ENCODE measurements at regions of chr5 and their contacts with region 1.

Region 1: GRCh38 chr5:16552666-16553343 is 64.0 kb downstream of the RETREG1 start:
- DNase-seq: peak; percentile 62
- H3K4me3 ChIP-seq: no peak overlapping the region
- H3K27ac ChIP-seq: no peak overlapping the region
- H3K4me1 ChIP-seq: no peaks in the 10 kb centered on the region
- H3K27me3 ChIP-seq: no peaks in the 10 kb centered on the region
- CTCF ChIP-seq: peak; percentile 91 to 97

Region 2: DNA sequence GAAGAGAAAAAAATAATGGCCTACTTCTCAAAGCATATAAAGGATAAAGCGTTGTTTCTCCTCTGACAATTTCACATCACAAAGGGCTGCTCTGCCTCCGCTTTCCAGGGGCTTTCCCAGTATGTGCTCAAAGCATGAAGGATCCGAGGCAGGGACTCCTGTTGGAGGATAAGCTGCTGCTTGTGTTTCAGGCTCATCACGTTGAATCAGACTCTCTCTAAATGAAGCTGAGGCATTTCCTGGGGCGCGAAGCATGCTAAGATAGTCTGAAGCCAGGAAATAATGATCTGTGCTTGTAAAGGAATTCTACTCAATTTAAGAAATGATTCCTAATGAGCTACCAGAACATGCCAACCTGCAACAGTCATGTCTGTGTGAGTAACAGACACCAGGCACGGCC is 470.8 kb before region 1 on chr5:
- CTCF ChIA-PET with region 1: no interaction called
- dilution Hi-C with region 1: no loop called
- in situ Hi-C with region 1: no loop called
- intact Hi-C with region 1: no loop called
- DNase-seq: no peak
- H3K4me3 ChIP-seq: no peak overlapping the region
- H3K27ac ChIP-seq: no peak overlapping the region
- H3K4me1 ChIP-seq: no peaks in the 10 kb centered on the region
- H3K27me3 ChIP-seq: no peaks in the 10 kb centered on the region
- CTCF ChIP-seq: no peak

Region 3: GRCh38 chr5:16345454-16345853 is 207.4 kb before region 1 on chr5:
- CTCF ChIA-PET with region 1: interaction called, 3 read pairs
- dilution Hi-C with region 1: no loop called
- in situ Hi-C with region 1: no loop called
- intact Hi-C with region 1: loop called (anchors 1 kb)
- DNase-seq: no peak
- H3K4me3 ChIP-seq: no peak overlapping the region
- H3K27ac ChIP-seq: no peak overlapping the region
- H3K4me1 ChIP-seq: no peaks in the 10 kb centered on the region
- H3K27me3 ChIP-seq: no peaks in the 10 kb centered on the region
- CTCF ChIP-seq: peak; percentile 22 to 48

Region 4: DNA sequence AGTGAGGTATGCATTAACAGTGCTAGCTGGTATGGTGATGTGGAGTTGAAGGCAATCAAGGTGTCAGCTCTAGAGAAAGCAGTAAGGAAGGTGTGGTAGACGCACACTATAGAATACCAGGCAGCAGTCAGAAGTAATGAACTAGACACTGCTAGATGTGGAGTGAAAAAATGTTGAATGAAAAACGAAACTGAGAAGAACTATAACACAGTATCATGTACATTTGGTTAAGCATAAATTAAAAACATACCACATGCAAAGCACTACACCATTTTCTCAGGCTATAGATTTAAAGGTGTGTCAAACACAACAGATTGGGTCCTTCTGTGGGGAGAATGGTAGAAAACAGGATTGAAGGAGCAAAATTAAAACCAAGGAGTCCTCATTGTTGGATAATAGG is 102.6 kb before region 1 on chr5:
- CTCF ChIA-PET with region 1: no interaction called
- dilution Hi-C with region 1: no loop called
- in situ Hi-C with region 1: no loop called
- intact Hi-C with region 1: no loop called
- DNase-seq: no peak
- H3K4me3 ChIP-seq: no peak overlapping the region
- H3K27ac ChIP-seq: no peak overlapping the region
- H3K4me1 ChIP-seq: no peaks in the 10 kb centered on the region
- H3K27me3 ChIP-seq: no peaks in the 10 kb centered on the region
- CTCF ChIP-seq: no peak

Region 5: GRCh38 chr5:16489322-16489791 is 63.4 kb before region 1 on chr5:
- CTCF ChIA-PET with region 1: interaction called, 5 read pairs
- dilution Hi-C with region 1: no loop called
- in situ Hi-C with region 1: loop called in 1 of 2 experiments (anchors 5 kb)
- intact Hi-C with region 1: loop called (anchors 1 kb)
- DNase-seq: peak; percentile 52
- H3K4me3 ChIP-seq: no peak overlapping the region
- H3K27ac ChIP-seq: peak overlapping the region; percentile 38
- H3K4me1 ChIP-seq: peaks cover 23% of the 10 kb centered on the region
- H3K27me3 ChIP-seq: no peaks in the 10 kb centered on the region
- CTCF ChIP-seq: peak; percentile 69 to 75

Region 6: DNA sequence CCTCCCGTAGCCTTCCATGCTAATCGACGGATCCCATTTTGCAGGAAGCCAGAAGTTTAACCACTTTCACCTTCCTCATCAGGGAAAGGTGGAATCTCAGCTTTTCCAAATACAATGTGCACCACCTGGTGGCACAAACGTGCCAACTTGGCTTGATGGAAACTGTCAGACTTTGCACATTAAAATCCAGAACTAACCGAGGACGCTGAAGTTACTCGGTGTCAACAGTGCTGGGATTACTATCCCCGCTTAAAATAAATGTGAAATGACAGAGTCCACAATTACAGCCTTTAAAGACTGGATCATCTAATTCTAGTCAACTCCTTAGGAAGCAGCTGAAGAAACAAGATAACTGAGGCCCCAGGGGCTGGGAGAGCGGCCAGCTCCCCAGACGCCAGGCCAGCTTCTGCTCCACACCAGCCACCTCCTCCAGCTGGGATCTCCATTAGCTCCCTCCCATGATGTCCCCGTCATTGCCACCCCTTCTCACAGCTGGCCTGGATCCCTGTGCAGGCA is 114.1 kb after region 1 on chr5:
- CTCF ChIA-PET with region 1: no interaction called
- dilution Hi-C with region 1: no loop called
- in situ Hi-C with region 1: loop called in 1 of 2 experiments (anchors 5 kb)
- intact Hi-C with region 1: loop called (anchors 2 kb)
- DNase-seq: no peak
- H3K4me3 ChIP-seq: no peak overlapping the region
- H3K27ac ChIP-seq: no peak overlapping the region
- H3K4me1 ChIP-seq: no peaks in the 10 kb centered on the region
- H3K27me3 ChIP-seq: no peaks in the 10 kb centered on the region
- CTCF ChIP-seq: peak; percentile 45 to 63

Measured in mammary epithelial cell (primary cell).